ENCODE measurements at regions of chr14 and their contacts with region 1.

Region 1: GRCh38 chr14:20782280-20782890 is 1.3 kb downstream of the RNASE6 start:
- DNase-seq: no peak
- H3K4me3 ChIP-seq: no peak overlapping the region
- H3K27ac ChIP-seq: no peak overlapping the region
- H3K4me1 ChIP-seq: no peaks in the 10 kb centered on the region
- H3K27me3 ChIP-seq: no peaks in the 10 kb centered on the region
- CTCF ChIP-seq: no peak

Region 2: GRCh38 chr14:20714593-20715250 is 67.7 kb before region 1 on chr14:
- CTCF ChIA-PET with region 1: no interaction called
- dilution Hi-C with region 1: loop called (anchors 5 kb)
- in situ Hi-C with region 1: no loop called
- intact Hi-C with region 1: no loop called
- DNase-seq: peak; percentile 79
- H3K4me3 ChIP-seq: no peak overlapping the region
- H3K27ac ChIP-seq: no peak overlapping the region
- H3K4me1 ChIP-seq: no peaks in the 10 kb centered on the region
- H3K27me3 ChIP-seq: no peaks in the 10 kb centered on the region
- CTCF ChIP-seq: no peak

Region 3: DNA sequence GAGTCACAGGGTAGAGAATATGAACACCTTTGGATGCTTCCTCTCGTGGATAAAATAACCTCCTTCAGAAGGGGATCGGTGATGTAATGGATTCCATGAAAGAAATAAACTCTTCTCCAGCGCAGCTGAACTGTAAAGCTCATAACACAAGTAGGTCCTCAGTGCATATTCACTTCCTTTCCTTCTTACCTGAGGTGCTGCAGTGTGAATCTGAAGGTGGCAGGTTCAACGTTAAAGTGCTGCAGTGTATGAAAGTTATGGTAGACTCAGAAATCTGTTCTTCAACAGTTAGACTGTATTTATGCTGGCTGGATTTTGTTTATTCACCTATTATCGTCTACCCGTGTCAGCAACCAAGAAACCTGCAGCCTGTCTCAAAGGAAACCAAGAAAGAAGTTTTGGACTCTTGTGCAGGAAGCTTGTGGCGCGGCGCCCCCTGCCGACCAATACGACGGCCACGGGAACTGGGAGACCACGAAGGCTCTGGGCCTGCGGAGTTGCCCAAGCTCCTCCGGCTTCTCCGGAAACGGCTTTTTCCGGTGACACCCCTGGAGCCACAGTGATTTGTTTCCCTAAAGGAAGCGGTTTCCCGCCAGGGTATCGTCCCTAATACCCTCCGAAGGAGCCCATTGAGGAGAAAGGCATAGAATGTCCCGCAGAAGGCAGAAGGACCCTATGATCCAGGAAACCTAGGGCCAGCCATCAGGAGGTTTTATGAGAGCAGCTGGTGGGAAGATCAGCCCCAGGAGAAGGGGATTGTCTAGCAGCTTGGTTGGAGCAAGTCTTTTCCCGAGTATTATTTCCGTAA is 91.2 kb after region 1 on chr14:
- CTCF ChIA-PET with region 1: no interaction called
- dilution Hi-C with region 1: loop called (anchors 5 kb)
- in situ Hi-C with region 1: no loop called
- intact Hi-C with region 1: no loop called
- DNase-seq: peak; percentile 31
- H3K4me3 ChIP-seq: no peak overlapping the region
- H3K27ac ChIP-seq: no peak overlapping the region
- H3K4me1 ChIP-seq: no peaks in the 10 kb centered on the region
- H3K27me3 ChIP-seq: no peaks in the 10 kb centered on the region
- CTCF ChIP-seq: peak; percentile 54 to 55

Region 4: GRCh38 chr14:20904393-20905029 is 122.1 kb after region 1 on chr14:
- CTCF ChIA-PET with region 1: no interaction called
- dilution Hi-C with region 1: no loop called
- in situ Hi-C with region 1: no loop called
- intact Hi-C with region 1: no loop called
- DNase-seq: no peak
- H3K4me3 ChIP-seq: no peak overlapping the region
- H3K27ac ChIP-seq: no peak overlapping the region
- H3K4me1 ChIP-seq: no peaks in the 10 kb centered on the region
- H3K27me3 ChIP-seq: no peaks in the 10 kb centered on the region
- CTCF ChIP-seq: no peak

Region 5: GRCh38 chr14:20934148-20934762 is 151.9 kb after region 1 on chr14:
- CTCF ChIA-PET with region 1: no interaction called
- dilution Hi-C with region 1: no loop called
- in situ Hi-C with region 1: no loop called
- intact Hi-C with region 1: no loop called
- DNase-seq: no peak
- H3K4me3 ChIP-seq: no peak overlapping the region
- H3K27ac ChIP-seq: no peak overlapping the region
- H3K4me1 ChIP-seq: no peaks in the 10 kb centered on the region
- H3K27me3 ChIP-seq: no peaks in the 10 kb centered on the region
- CTCF ChIP-seq: peak; percentile 39 to 40

Measured in mammary epithelial cell (primary cell).